ENCODE measurements at regions of chr1 and their contacts with region 1.

Region 1: DNA sequence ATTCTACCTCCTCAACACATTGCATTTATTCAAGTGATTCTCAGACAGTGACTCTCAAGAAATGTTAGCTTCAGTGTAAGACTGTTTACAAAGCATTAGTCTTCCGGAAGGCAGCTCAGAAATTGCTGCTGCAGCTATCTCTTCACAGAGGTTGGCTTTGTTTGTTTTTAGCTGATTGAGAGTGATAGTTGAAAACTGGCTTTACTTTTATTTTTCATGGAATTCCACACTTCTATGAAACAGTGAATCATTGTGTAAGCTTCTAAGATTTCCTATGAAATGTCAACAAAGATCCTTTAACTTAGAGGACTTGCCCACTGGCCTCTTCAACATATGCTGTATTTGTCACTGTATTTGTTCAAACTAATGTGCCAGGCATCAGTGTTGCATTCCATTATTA is 121.3 kb downstream of the TNNI3K start:
- DNase-seq: no peak

Region 2: DNA sequence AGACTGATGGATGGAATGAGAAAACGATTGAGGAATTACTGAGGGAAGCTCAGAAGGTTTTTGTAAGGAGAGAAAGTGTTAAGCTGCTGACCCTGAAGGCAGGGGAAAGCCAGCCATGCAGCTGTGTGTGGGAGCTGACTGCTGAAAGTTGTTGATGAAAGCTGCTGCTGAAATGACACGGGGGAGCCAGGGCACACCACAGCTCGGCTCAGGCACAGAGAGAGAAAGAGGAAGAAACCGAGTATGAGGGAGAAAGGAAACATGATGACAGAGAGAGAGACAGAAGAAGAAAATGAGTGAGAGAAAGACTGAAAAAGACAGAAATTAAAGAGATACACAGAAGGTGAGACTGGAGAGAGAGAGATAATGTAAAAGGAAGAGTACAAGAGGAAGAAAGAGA is 40.4 kb after region 1 on chr1:
- intact Hi-C with region 1: loop called (anchors 5 kb)
- DNase-seq: no peak

Region 3: GRCh38 chr1:74504125-74504932 is 147.8 kb after region 1 on chr1:
- intact Hi-C with region 1: no loop called
- DNase-seq: no peak

Measured in cardiac septum (tissue), 1 donor.